ENCODE measurements at regions of chr2 and their contacts with region 1.

Region 1: GRCh38 chr2:102091908-102092307 is 50.6 kb upstream of the IL1R1 start:
- DNase-seq: no peak
- ATAC-seq: no peak
- H3K4me3 ChIP-seq: no peak overlapping the region
- H3K27ac ChIP-seq: no peak overlapping the region
- H3K4me1 ChIP-seq: peaks cover 10% of the 10 kb centered on the region; the same call in 1 of the 2 replicates
- H3K27me3 ChIP-seq: no peaks in the 10 kb centered on the region
- CTCF ChIP-seq: no peak

Region 2: GRCh38 chr2:102041351-102041750 is 50.6 kb before region 1 on chr2:
- CTCF ChIA-PET with region 1: no interaction called
- POLR2A ChIA-PET with region 1: interaction called, 13 read pairs
- intact Hi-C with region 1: no loop called
- DNase-seq: no peak
- ATAC-seq: no peak
- H3K4me3 ChIP-seq: no peak overlapping the region
- H3K27ac ChIP-seq: no peak overlapping the region
- H3K4me1 ChIP-seq: no peaks in the 10 kb centered on the region
- H3K27me3 ChIP-seq: peaks cover 4% of the 10 kb centered on the region; the same call in 1 of the 2 replicates
- CTCF ChIP-seq: no peak